Ovary (tissue), 10 donors: ENCODE measurements at regions of chr18 and their contacts with region 1.

Region 1: GRCh38 chr18:59823596-59824195 is 76.1 kb upstream of the PMAIP1 start:
- DNase-seq: peak; percentile 68 to 88 (median 80)
- H3K4me3 ChIP-seq: no peak overlapping the region
- H3K27ac ChIP-seq: no peak overlapping the region
- H3K4me1 ChIP-seq: peaks cover 3% of the 10 kb centered on the region
- H3K27me3 ChIP-seq: no peaks in the 10 kb centered on the region
- CTCF ChIP-seq: peak; percentile 78 to 89 (median 85)
- EP300 ChIP-seq: no peak
- POLR2A ChIP-seq: no peak

Region 2: DNA sequence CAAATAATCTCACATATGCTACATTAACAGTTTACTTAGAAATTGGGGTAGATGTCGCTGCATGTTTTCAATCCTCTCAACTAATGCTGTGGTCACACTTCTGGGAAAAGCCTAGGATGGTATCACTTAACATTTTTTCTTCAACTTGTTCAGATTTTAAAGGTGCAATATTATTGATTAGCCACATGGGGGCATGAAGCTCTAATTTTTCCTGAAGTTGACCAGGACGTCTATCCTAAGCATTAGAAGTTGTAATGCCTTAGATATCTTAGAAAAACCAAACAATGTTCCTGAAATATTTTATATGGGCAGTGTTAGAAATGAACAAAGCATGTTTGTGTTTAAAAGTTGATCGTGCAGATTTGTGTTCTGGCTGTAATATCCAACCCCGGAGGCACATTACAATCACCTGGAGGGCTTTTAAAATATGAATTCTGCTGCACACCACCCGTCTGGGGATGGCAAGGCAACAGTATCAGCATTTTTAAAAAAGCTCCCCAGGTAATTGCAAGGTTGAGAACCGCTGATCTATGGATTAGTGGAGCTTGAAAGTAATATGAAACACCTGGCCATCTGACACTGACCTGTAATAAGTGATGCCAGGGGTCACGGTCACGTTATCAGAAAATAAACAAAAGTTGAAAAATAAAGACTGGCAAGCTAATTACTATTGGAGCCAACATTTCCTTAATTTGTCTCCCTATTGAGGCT is 364.2 kb before region 1 on chr18:
- intact Hi-C with region 1: loop called (anchors 1 to 5 kb)
- DNase-seq: no peak
- H3K4me3 ChIP-seq: no peak overlapping the region
- H3K27ac ChIP-seq: peak overlapping the region in 1 of 2 donors; percentile 22
- H3K4me1 ChIP-seq: peaks cover 6% of the 10 kb centered on the region
- H3K27me3 ChIP-seq: no peaks in the 10 kb centered on the region
- CTCF ChIP-seq: peak; percentile 44 to 81 (median 72)
- EP300 ChIP-seq: no peak
- POLR2A ChIP-seq: no peak

Region 3: DNA sequence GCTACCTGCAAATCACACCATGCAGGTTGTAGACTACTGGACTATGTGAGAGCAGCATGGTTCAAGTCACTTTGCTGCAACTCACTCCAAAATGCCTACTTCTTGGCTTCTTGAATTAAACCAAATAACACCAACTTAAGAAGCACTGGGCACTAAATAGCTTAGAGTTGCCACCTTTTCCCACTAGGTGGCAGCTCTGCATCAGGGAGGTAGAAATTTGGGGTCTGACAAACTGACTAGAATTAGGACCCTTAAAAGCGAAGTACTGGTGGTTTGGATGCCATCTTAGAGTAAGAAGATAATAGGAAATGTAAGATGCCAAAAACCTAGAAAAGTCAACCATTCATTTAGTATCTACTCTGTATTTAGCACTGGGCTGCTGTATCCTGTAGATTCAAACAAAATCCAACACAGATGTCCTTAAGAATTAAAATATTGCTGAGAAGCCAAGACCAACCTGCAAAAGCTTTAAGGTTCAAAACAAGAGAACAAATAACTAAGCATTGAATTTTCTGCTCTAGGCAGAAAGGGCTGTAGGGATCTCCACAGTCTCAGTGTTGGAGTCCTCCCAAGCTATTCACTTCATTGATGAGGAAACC is 192.0 kb before region 1 on chr18:
- intact Hi-C with region 1: loop called in 1 of 4 experiments (anchors 10 kb)
- DNase-seq: no peak
- H3K4me3 ChIP-seq: no peak overlapping the region
- H3K27ac ChIP-seq: no peak overlapping the region
- H3K4me1 ChIP-seq: peaks cover 2% of the 10 kb centered on the region
- H3K27me3 ChIP-seq: no peaks in the 10 kb centered on the region
- CTCF ChIP-seq: peak in 1 of 3 donors; percentile 27
- EP300 ChIP-seq: no peak
- POLR2A ChIP-seq: no peak

Region 4: DNA sequence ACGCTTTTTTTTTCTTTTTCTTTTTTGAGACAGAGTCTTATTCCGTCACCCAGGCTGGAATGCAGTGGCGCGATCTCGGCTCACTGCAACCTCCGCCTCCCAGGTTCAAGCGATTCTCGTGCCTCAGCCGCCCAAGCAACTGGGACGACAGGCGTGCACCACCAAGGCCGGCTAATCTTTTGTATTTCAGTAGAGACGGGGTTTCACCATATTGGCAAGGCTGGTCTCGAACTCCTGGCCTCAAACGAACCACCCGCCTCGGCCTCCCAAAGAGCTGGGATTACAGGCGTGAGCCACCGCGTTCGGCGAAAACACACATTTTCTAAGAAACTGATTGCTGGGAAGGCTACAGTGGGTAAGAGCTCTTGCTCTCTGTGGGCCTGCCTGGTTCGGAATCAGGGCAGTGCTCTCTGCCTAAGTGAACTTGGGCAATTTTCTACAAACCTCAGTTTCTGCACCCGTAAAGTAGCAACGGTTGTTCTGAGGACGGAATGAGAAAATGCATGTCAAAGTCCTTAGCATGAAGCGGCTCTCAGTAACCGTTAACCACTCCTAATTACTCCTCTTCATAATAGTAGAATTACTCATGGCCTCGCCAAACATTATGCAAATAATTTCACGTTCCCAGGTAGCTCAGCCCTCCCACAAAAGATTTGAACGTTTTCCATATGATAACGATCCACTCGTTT is 75.1 kb after region 1 on chr18:
- intact Hi-C with region 1: no loop called
- DNase-seq: no peak
- H3K4me3 ChIP-seq: no peak overlapping the region
- H3K27ac ChIP-seq: no peak overlapping the region
- H3K4me1 ChIP-seq: peaks cover 3% of the 10 kb centered on the region
- H3K27me3 ChIP-seq: no peaks in the 10 kb centered on the region
- CTCF ChIP-seq: no peak
- EP300 ChIP-seq: no peak
- POLR2A ChIP-seq: no peak